Posterior vena cava (tissue), 2 donors: ENCODE measurements at regions of chr15 and their contacts with region 1.

Region 1: GRCh38 chr15:91916051-91916450 is 62.5 kb downstream of the SLCO3A1 start:
- DNase-seq: no peak

Region 2: DNA sequence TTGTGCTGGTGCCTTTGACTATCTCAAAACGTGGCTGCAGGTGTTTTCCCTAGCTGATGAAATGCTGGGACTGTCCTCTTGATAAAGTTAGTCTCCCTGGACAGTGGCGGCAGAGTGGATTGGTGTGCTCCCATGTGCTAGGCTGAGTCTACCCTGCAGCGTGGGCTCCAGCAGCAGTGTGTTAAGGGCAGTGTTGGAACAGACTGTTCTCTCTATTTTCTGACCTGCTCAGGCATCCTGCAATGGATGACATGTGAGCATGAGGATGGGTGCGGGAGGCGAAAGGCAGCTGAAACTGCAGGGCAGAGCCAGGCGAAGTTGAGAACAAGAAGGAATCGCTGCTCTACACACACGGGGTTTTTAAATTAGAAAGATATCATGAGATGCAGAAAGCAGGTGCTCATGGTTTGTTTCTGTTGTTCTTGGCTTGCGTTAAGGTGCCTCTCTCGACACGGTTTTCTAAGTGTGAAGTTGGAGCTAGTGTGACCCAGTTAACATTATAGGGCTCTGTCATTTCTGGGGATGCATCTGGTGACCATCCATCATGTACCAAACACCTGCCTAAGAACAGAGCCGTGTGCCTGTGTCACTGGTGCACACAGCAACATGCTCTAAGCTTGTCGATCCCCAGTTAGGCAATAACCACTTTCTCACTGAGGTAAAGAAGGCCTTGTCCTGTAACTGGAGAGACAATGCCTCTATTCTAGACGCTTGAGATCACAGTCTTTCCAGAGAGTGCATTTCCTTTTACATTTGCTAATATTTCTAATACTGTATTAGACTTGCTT is 18.3 kb before region 1 on chr15:
- intact Hi-C with region 1: loop called in 1 of 2 experiments (anchors 1 kb)
- DNase-seq: no peak